Mammary epithelial cell (primary cell): ENCODE measurements at regions of chr15 and their contacts with region 1.

Region 1: DNA sequence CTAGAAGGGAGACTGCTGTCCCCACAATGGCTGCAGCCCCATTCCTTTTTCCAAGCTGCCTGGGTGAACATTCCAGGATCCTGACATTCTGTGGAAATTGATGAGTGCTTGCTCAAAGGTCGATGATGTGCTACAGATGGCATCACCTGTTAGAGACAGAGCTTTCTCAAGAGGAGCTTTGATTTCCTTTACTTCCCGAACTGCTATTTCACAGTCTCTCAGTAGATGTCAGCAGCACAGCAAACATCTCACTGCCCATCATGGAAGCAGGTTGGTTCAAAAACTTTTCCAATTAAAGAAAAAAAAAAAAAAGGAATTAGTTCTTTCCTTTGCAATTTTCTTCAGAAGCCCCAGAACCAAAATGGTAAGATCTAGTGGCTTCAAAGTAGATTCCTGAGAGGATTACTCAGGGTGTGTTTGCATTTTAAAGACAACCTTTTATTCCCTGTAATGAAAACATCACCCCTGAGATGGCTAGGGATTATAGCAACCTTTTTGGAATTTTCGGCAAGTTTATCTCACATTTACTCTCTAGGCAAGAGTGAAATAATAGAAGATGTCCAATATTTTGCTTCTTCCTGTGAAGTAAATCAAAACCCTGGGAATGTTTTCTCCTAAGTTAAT is 44.8 kb downstream of the POLR2M start:
- DNase-seq: peak; percentile 34
- H3K4me3 ChIP-seq: no peak overlapping the region
- H3K27ac ChIP-seq: no peak overlapping the region
- H3K4me1 ChIP-seq: no peaks in the 10 kb centered on the region
- H3K27me3 ChIP-seq: no peaks in the 10 kb centered on the region
- CTCF ChIP-seq: peak; percentile 67 to 86

Region 2: GRCh38 chr15:57667171-57667849 is 84.0 kb before region 1 on chr15:
- CTCF ChIA-PET with region 1: no interaction called
- dilution Hi-C with region 1: no loop called
- in situ Hi-C with region 1: no loop called
- intact Hi-C with region 1: loop called (anchors 2 kb)
- DNase-seq: peak; percentile 50
- H3K4me3 ChIP-seq: no peak overlapping the region
- H3K27ac ChIP-seq: peak overlapping the region; percentile 6
- H3K4me1 ChIP-seq: peaks cover 18% of the 10 kb centered on the region
- H3K27me3 ChIP-seq: no peaks in the 10 kb centered on the region
- CTCF ChIP-seq: peak; percentile 47 to 64

Region 3: GRCh38 chr15:57769266-57769665 is 18.0 kb after region 1 on chr15:
- CTCF ChIA-PET with region 1: interaction called, 15 read pairs
- dilution Hi-C with region 1: no loop called
- in situ Hi-C with region 1: no loop called
- intact Hi-C with region 1: no loop called
- DNase-seq: no peak
- H3K4me3 ChIP-seq: no peak overlapping the region
- H3K27ac ChIP-seq: no peak overlapping the region
- H3K4me1 ChIP-seq: peaks cover 12% of the 10 kb centered on the region
- H3K27me3 ChIP-seq: no peaks in the 10 kb centered on the region
- CTCF ChIP-seq: no peak

Region 4: GRCh38 chr15:57784081-57784511 is 32.8 kb after region 1 on chr15:
- CTCF ChIA-PET with region 1: no interaction called
- dilution Hi-C with region 1: no loop called
- in situ Hi-C with region 1: no loop called
- intact Hi-C with region 1: no loop called
- DNase-seq: peak; percentile 83
- H3K4me3 ChIP-seq: no peak overlapping the region
- H3K27ac ChIP-seq: peak overlapping the region; percentile 65
- H3K4me1 ChIP-seq: peaks cover 24% of the 10 kb centered on the region
- H3K27me3 ChIP-seq: no peaks in the 10 kb centered on the region
- CTCF ChIP-seq: no peak

Region 5: GRCh38 chr15:57861036-57861638 is 109.8 kb after region 1 on chr15:
- CTCF ChIA-PET with region 1: interaction called, 90 read pairs
- dilution Hi-C with region 1: loop called (anchors 10 kb)
- in situ Hi-C with region 1: loop called (anchors 5 kb)
- intact Hi-C with region 1: loop called (anchors 1 kb)
- DNase-seq: peak; percentile 61
- H3K4me3 ChIP-seq: no peak overlapping the region
- H3K27ac ChIP-seq: no peak overlapping the region
- H3K4me1 ChIP-seq: peaks cover 8% of the 10 kb centered on the region
- H3K27me3 ChIP-seq: no peaks in the 10 kb centered on the region
- CTCF ChIP-seq: peak; percentile 66 to 75

Region 6: DNA sequence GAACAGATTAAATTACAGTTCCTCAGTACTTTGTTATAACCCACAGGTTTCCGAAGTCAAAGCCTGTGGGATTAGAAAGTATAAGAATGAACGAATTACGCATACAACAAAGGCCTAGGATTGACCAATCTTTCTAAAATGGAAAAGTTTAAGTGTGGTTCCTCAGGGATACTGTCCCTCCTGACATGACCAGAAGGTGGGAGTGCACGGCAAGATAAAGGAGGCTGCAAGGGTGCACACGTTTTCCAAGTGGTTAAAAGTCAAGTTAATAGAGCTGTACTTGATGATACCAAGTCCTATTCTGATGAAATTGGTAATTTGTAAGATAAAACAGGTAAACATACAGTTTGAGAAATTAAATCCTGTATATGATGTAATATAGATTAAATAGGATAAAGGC is 218.1 kb after region 1 on chr15:
- CTCF ChIA-PET with region 1: interaction called, 5 read pairs
- dilution Hi-C with region 1: no loop called
- in situ Hi-C with region 1: no loop called
- intact Hi-C with region 1: loop called (anchors 10 kb)
- DNase-seq: peak; percentile 11
- H3K4me3 ChIP-seq: no peak overlapping the region
- H3K27ac ChIP-seq: no peak overlapping the region
- H3K4me1 ChIP-seq: no peaks in the 10 kb centered on the region
- H3K27me3 ChIP-seq: no peaks in the 10 kb centered on the region
- CTCF ChIP-seq: peak; percentile 43 to 56

Region 7: DNA sequence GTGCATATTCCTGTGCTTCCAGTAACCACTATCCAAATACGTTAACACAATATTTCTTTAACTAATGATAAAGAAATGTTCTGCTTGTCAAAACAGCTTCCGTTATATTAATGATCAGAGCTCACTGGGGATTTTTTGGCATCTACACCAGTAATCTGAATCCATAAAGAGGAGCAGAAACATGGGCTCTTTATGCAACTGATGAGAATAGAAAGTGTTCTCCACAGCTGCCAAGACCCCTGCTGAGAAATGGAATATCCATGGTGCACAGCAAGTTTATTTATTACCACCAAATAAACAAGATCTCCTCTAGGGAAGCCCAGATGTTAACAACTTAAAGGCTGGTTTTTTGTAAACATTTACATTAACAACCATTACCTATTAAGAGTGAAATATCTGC is 259.7 kb after region 1 on chr15:
- CTCF ChIA-PET with region 1: no interaction called
- dilution Hi-C with region 1: no loop called
- in situ Hi-C with region 1: no loop called
- intact Hi-C with region 1: no loop called
- DNase-seq: no peak
- H3K4me3 ChIP-seq: no peak overlapping the region
- H3K27ac ChIP-seq: no peak overlapping the region
- H3K4me1 ChIP-seq: peaks cover 6% of the 10 kb centered on the region
- H3K27me3 ChIP-seq: no peaks in the 10 kb centered on the region
- CTCF ChIP-seq: no peak

Region 8: DNA sequence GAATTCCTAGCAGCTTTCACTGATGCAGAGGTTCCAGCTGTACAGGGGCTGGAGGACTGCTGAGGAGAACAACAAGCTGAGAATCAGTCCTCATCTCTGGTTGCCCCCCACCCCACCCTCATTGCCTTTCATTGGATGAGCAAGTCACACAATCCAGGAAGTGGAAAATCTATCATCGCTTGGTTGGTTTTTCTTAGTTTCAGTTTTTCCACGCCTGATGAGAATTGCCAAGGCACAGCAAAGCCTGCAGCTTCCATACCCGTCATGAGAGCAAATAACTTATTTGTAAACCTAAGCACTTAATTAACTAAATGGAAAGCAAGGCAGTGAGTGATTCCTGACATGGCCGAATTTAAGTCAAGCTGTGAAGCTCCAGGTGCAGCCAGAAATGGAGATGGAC is 659.1 kb after region 1 on chr15:
- CTCF ChIA-PET with region 1: interaction called, 17 read pairs
- dilution Hi-C with region 1: no loop called
- in situ Hi-C with region 1: no loop called
- intact Hi-C with region 1: no loop called
- DNase-seq: no peak
- H3K4me3 ChIP-seq: no peak overlapping the region
- H3K27ac ChIP-seq: no peak overlapping the region
- H3K4me1 ChIP-seq: no peaks in the 10 kb centered on the region
- H3K27me3 ChIP-seq: no peaks in the 10 kb centered on the region
- CTCF ChIP-seq: no peak